ENCODE measurements at regions of chr3 and their contacts with region 1.

Region 1: GRCh38 chr3:150603153-150603979 is at the start of gene SELENOT:
- DNase-seq: peak; percentile 94
- ATAC-seq: peak; percentile 87
- H3K4me3 Mint-ChIP-seq: peak within 1 kb of the TSS; percentile 92
- H3K27ac Mint-ChIP-seq: peak within 1 kb of the TSS; percentile 92
- H3K4me1 Mint-ChIP-seq: peaks cover 78% of the 10 kb centered on the region
- H3K27me3 Mint-ChIP-seq: no peaks in the 10 kb centered on the region
- CTCF ChIP-seq: no peak
- total RNA-seq, gene SELENOT: 48.3 to 57.0 TPM (median 53.4 TPM) in 3 replicates

Region 2: DNA sequence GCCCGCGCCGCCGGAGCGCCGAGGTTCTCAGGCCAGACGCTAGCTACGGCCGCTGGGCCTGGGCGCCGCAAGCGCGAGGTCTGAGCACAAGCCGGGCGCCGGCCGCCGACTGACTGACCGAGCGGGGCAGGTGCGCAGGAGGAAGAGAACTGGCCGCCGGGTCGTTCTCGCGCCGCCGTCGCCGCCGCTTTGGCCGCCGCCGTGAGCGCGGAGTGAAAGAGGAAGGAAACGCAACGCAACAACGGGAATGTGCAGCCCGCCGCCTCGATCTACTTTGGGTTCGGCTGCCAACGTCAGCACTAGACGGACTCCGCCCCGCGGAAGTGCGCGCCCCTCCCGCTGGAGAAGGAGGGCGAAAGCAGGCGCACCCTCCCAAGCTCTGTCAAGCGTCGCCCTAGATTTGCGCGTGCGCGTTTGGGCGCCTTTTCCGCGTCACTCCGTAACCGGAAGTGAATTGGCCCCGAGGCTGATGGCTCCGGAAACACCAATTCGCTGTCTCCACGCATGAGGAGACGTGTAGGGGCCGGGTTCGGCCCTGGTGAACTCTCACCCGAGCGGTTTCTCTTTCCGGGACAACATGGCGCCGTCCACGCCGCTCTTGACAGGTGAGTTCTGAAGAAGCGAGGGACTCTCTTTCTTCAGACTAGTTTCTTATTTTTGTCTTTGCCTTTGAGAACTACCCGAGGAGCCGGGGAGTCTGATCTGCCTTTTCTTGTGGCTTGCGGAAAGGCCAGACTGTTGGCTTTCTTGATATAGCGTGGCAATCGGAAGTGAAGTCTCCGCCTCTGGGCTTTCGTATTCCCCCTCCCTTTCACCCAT is 56.9 kb before region 1 on chr3 and contains the starts of genes EIF2A and SERP1:
- CTCF ChIA-PET with region 1: no interaction called
- POLR2A ChIA-PET with region 1: interaction called, 11 read pairs
- DNase-seq: peak; percentile 98
- ATAC-seq: peak; percentile 95
- H3K4me3 Mint-ChIP-seq: peak within 1 kb of the TSS; percentile 93
- H3K27ac Mint-ChIP-seq: peak within 1 kb of the TSS; percentile 96
- H3K4me1 Mint-ChIP-seq: peaks cover 22% of the 10 kb centered on the region
- H3K27me3 Mint-ChIP-seq: no peaks in the 10 kb centered on the region
- CTCF ChIP-seq: no peak
- total RNA-seq, gene EIF2A: 76.2 to 88.4 TPM (median 82.7 TPM) in 3 replicates
- total RNA-seq, gene SERP1: 86.9 to 98.3 TPM (median 94.9 TPM) in 3 replicates